GM23248 (cell line): ENCODE measurements at regions of chr16 and their contacts with region 1.

Region 1: DNA sequence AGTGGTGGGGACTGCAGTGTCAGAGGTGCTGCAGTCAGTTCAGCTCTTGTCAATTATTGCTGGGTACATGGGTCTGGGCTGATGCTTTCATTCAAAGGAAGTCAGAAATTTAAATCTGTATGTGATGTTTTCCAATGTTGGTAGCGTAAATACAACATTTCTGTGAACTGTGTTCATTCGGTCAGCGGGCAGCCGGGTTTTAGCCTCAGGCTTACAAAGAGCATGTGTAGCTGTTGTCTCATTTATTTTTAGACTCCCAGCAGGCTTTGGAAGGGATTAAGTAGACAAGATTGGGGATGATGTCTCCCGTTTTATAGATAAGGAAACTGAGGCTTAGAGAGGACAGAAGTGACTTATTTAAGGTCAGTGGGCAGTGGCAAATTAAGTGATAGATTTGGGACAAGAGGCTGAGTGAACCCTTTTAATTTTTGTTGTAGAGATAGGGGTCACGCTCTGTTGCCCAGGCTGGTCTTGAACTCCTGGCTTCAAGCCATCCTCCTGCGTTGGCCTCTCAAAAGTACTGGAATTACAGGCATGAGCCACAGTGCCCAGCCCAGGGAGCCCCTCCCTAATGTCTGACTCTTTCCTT is 8.1 kb downstream of the AQP8 start:
- DNase-seq: no peak
- H3K4me3 ChIP-seq: no peak overlapping the region
- H3K27ac ChIP-seq: no peak overlapping the region
- H3K4me1 ChIP-seq: no peaks in the 10 kb centered on the region
- H3K27me3 ChIP-seq: no peaks in the 10 kb centered on the region

Region 2: GRCh38 chr16:25051406-25052150 is 173.2 kb before region 1 on chr16:
- in situ Hi-C with region 1: loop called (anchors 10 kb)
- DNase-seq: peak; percentile 70
- H3K4me3 ChIP-seq: peak overlapping the region; percentile 9
- H3K27ac ChIP-seq: peak overlapping the region; percentile 30
- H3K4me1 ChIP-seq: peaks cover 42% of the 10 kb centered on the region
- H3K27me3 ChIP-seq: no peaks in the 10 kb centered on the region

Region 3: GRCh38 chr16:25270577-25270976 is 45.8 kb after region 1 on chr16:
- in situ Hi-C with region 1: no loop called
- DNase-seq: no peak
- H3K4me3 ChIP-seq: no peak overlapping the region
- H3K27ac ChIP-seq: no peak overlapping the region
- H3K4me1 ChIP-seq: no peaks in the 10 kb centered on the region
- H3K27me3 ChIP-seq: no peaks in the 10 kb centered on the region

Region 4: DNA sequence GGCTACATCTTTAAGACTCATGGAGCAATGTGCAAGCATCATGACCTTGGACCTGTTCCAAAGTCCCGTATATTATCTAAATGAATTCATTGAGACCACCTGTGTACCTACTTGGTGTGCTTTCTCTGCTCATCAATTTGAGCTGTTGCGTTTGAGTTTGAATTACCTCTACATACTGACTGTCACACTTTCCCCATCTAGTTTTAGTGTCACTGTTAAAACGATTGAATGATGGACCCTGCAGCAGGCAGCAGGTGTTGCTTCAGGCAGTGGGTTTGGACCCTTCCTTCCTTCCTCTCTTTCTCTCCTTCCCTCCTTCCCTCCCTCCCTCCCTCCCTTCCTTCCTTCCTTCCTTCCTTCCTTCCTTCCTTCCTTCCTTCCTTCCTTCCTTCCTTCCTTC is 66.8 kb after region 1 on chr16:
- in situ Hi-C with region 1: no loop called
- DNase-seq: no peak
- H3K4me3 ChIP-seq: no peak overlapping the region
- H3K27ac ChIP-seq: no peak overlapping the region
- H3K4me1 ChIP-seq: no peaks in the 10 kb centered on the region
- H3K27me3 ChIP-seq: no peaks in the 10 kb centered on the region

Region 5: GRCh38 chr16:25523183-25523582 is 298.4 kb after region 1 on chr16:
- in situ Hi-C with region 1: no loop called
- DNase-seq: no peak
- H3K4me3 ChIP-seq: no peak overlapping the region
- H3K27ac ChIP-seq: no peak overlapping the region
- H3K4me1 ChIP-seq: no peaks in the 10 kb centered on the region
- H3K27me3 ChIP-seq: no peaks in the 10 kb centered on the region